HepG2 (cell line): ENCODE measurements at regions of chr6 and their contacts with region 1.

Region 1: GRCh38 chr6:29926413-29927274 is 15.7 kb upstream of the HLA-A start:
- DNase-seq: peak; percentile 78
- ATAC-seq: peak; percentile 96
- H3K4me3 ChIP-seq: peak overlapping the region; percentile 74 to 85 (median 77)
- H3K27ac ChIP-seq: peak overlapping the region; percentile 76
- H3K4me1 ChIP-seq: peaks cover 48% of the 10 kb centered on the region
- H3K27me3 ChIP-seq: no peaks in the 10 kb centered on the region
- CTCF ChIP-seq: no peak
- EP300 ChIP-seq: no peak
- POLR2A ChIP-seq: no peak
- RAD21 ChIP-seq: no peak

Region 2: DNA sequence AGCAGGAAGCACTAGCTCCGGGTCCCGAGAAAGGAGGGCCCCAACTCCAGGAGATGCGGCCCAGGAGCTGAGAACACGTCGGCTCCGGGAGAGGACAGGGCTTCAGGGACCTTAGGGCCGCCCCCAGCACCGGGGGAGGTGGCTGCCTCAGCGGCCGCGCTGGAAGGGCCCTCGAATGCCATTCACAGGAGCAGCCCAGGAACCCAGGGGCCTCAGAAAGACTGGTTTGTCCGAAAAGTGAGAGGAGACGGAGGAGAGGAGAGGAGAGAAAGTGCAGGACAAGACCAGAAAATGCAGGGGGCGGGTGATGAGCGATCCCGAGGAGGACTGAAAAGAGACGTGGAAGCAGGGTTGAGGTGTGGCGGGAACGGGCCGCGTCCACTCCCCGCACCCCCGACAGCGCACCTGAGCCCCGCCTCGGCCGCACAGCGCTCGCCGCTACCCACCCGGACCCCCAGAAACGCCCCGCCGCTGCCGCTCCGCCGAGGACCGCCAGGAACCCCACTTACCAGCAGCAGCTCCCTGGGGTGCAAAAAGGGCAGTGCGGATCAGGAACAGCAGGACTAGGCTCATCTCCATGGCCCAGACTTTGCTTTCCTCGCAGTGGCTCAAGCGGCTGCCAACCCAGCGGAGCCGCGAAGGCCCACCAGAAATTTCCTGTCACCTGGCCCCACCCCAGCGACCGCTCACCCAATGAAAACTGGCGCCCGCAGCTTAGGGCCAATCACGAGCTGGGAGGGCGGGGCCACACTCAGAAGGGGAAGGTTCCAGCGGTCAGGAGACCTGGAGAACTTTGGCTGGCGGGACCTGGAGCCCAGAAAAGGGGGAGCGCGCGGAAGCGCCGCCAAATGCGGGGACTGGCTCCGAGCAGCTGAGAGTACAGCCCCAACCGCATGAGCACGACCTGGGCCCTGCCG is 178.0 kb before region 1 on chr6:
- CTCF ChIA-PET with region 1: no interaction called
- POLR2A ChIA-PET with region 1: no interaction called
- in situ Hi-C with region 1: no loop called
- intact Hi-C with region 1: no loop called
- DNase-seq: peak; percentile 82
- ATAC-seq: peak; percentile 89
- H3K4me3 ChIP-seq: peak overlapping the region; percentile 47 to 76 (median 65)
- H3K27ac ChIP-seq: no peak overlapping the region
- H3K4me1 ChIP-seq: peaks cover 24% of the 10 kb centered on the region
- H3K27me3 ChIP-seq: peaks cover 0 to 24% of the 10 kb centered on the region in 2 experiments; a peak in 1 of 5 replicates
- CTCF ChIP-seq: no peak
- EP300 ChIP-seq: no peak
- POLR2A ChIP-seq: peak; percentile 47 to 67; a peak in 3 of 4 replicates
- RAD21 ChIP-seq: no peak

Region 3: DNA sequence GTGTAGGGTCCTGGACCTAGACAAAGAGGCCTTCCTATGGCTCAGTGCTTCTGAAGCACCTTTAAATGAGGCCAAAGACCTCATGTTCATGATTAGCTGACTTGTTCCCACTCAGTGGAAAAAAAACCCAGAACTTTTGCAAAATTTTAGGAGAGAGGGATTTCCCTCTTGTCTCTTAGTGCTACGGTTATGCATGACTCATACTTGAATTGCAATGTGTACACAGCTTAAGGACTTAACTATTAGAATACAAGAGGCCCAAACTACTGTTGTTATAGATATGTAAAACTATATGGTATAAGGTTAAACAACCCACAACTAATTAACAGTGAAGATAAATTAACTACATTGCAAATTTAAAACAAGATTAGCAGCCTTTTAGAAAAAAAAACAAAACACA is 16.7 kb before region 1 on chr6:
- CTCF ChIA-PET with region 1: no interaction called
- POLR2A ChIA-PET with region 1: interaction called, 17 read pairs
- in situ Hi-C with region 1: no loop called
- intact Hi-C with region 1: no loop called
- DNase-seq: no peak
- ATAC-seq: no peak
- H3K4me3 ChIP-seq: no peak overlapping the region
- H3K27ac ChIP-seq: no peak overlapping the region
- H3K4me1 ChIP-seq: peaks cover 79% of the 10 kb centered on the region
- H3K27me3 ChIP-seq: no peaks in the 10 kb centered on the region
- CTCF ChIP-seq: no peak
- EP300 ChIP-seq: no peak
- POLR2A ChIP-seq: no peak
- RAD21 ChIP-seq: no peak

Region 4: GRCh38 chr6:30556066-30556905 is 629.6 kb after region 1 on chr6 and contains the start of gene GNL1:
- CTCF ChIA-PET with region 1: no interaction called
- POLR2A ChIA-PET with region 1: no interaction called
- in situ Hi-C with region 1: no loop called
- intact Hi-C with region 1: no loop called
- DNase-seq: peak; percentile 94
- ATAC-seq: peak; percentile 85
- H3K4me3 ChIP-seq: peak within 1 kb of the TSS; percentile 87 to 93 (median 90)
- H3K27ac ChIP-seq: peak within 1 kb of the TSS; percentile 94
- H3K4me1 ChIP-seq: peaks cover 26% of the 10 kb centered on the region
- H3K27me3 ChIP-seq: no peaks in the 10 kb centered on the region; a peak in 1 of 5 replicates
- CTCF ChIP-seq: no peak
- EP300 ChIP-seq: peak in 1 of 2 experiments; percentile 49; a peak in 2 of 4 replicates
- POLR2A ChIP-seq: peak; percentile 82 to 85; a peak in 3 of 4 replicates
- RAD21 ChIP-seq: peak; percentile 44; the same call in 1 of the 2 replicates
- total RNA-seq, gene GNL1: 54.8 and 55.6 TPM in 2 replicates